ENCODE measurements at regions of chr10 and their contacts with region 1.

Region 1: DNA sequence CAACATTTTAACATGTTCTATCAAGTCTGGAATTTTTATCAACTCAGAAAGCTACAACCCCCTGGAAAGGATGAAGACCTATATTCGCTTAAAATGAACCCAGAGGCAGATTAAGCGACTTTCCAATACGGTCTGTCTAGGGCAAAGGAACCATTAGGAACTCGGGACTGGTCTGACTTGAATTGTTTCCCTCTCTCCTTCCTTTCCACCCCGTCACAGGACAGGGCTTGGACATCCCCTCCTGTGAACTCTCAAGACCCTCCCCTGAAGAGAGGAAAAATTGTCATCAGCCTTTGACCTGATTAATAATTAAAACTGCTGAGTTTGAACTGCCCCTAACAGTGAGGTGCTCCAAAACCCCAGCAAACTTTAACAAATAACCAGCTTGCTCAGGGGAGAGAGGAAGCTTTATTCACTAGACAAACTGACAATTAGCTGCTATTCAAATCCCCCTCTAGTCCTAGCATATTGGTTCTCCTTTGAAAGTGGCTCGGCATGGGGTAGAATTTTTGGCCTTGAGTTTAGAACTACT is 22.6 kb upstream of the SLF2 start:
- DNase-seq: no peak
- H3K4me3 ChIP-seq: no peak overlapping the region
- H3K27ac ChIP-seq: no peak overlapping the region
- H3K4me1 ChIP-seq: peaks cover 18% of the 10 kb centered on the region
- H3K27me3 ChIP-seq: peaks cover under 1% of the 10 kb centered on the region
- CTCF ChIP-seq: no peak

Region 2: DNA sequence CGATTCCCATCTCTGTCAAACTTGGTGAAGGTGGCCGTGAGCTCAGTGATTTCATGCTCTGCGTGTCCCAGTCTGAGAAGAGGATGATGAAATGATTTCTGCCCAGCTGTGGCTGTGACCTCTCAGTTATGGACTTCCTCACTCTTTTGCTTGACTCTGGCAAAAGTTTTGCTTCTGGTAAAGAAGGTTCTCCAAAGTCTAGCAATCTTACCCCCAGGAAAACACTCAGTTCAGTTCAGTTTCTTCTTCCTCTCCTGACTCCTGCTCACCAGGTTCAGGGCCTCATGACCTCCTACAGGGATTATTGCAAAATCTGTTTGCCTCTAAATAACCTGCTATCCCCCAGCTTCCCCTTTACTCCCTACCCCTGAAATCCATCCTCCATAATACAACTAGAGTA is 598.9 kb before region 1 on chr10:
- CTCF ChIA-PET with region 1: interaction called, 16 read pairs
- dilution Hi-C with region 1: no loop called
- in situ Hi-C with region 1: no loop called
- intact Hi-C with region 1: no loop called
- DNase-seq: no peak
- H3K4me3 ChIP-seq: no peak overlapping the region
- H3K27ac ChIP-seq: no peak overlapping the region
- H3K4me1 ChIP-seq: peaks cover 14% of the 10 kb centered on the region
- H3K27me3 ChIP-seq: no peaks in the 10 kb centered on the region
- CTCF ChIP-seq: no peak

Region 3: GRCh38 chr10:100847440-100847839 is 42.8 kb before region 1 on chr10:
- CTCF ChIA-PET with region 1: no interaction called
- dilution Hi-C with region 1: no loop called
- in situ Hi-C with region 1: no loop called
- intact Hi-C with region 1: no loop called
- DNase-seq: peak; percentile 68
- H3K4me3 ChIP-seq: no peak overlapping the region
- H3K27ac ChIP-seq: no peak overlapping the region
- H3K4me1 ChIP-seq: no peaks in the 10 kb centered on the region
- H3K27me3 ChIP-seq: peaks cover 5% of the 10 kb centered on the region
- CTCF ChIP-seq: no peak